Naive thymus-derived CD8-positive, alpha-beta T cell (primary cell): ENCODE measurements at regions of chr1 and their contacts with region 1.

Region 1: DNA sequence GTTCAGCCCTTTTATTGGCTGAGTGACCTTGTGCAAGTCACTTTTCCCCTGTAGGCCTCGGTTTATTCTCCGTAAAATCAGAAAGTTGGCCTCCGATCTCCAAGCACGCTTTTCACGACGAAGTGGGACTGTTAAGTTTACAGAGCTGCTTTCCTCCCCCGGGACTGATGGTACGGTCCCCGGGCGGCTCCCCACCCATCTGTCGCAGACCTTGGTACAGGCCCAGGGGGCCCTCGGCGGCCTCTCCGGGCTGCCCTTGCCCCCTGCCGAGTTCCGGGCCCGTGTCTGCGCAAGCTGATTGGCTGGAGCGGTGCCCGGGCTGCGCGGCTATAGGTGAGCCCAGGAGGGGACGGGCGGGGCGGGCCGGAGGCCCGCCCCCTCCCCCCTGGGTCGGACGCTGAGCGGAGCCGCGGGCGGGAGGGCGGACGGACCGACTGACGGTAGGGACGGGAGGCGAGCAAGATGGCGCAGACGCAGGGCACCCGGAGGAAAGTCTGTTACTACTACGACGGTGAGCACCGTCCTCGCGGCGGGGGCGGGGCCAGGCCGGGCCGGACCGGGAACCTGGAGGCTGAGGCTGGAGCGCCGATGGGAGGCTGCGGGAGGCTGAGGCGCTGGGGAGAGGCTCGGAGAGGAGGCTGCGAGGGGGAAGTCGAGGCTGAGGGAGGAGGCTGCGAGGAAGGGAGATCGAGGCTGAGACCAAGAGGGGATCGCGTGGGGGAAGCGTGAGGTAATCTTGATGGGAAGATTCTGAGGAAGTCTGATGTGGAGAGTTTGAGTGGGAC is at the start of gene HDAC1:
- DNase-seq: peak; percentile 92 to 98 (median 96)
- ATAC-seq: peak; percentile 95
- H3K4me3 Mint-ChIP-seq: peak within 1 kb of the TSS; percentile 93 to 100 (median 99)
- H3K27ac Mint-ChIP-seq: peak within 1 kb of the TSS; percentile 95 to 99 (median 96)
- H3K4me1 Mint-ChIP-seq: peaks cover 24 to 61% (median 51%) of the 10 kb centered on the region in 4 donors
- H3K27me3 Mint-ChIP-seq: no peaks in the 10 kb centered on the region
- polyA plus RNA-seq, gene HDAC1: 171 to 202 (median 173) TPM

Region 2: GRCh38 chr1:32221980-32222755 is 69.7 kb before region 1 on chr1 and contains the starts of genes EIF3I and TMEM234:
- POLR2A ChIA-PET with region 1: interaction called, 2,080 read pairs
- DNase-seq: peak; percentile 75 to 95 (median 90)
- ATAC-seq: peak; percentile 89 to 95
- H3K4me3 Mint-ChIP-seq: peak within 1 kb of the TSS; percentile 90 to 99 (median 96)
- H3K27ac Mint-ChIP-seq: peak within 1 kb of the TSS; percentile 95 to 100 (median 99)
- H3K4me1 Mint-ChIP-seq: peaks cover 14 to 53% (median 41%) of the 10 kb centered on the region in 4 donors
- H3K27me3 Mint-ChIP-seq: no peaks in the 10 kb centered on the region
- polyA plus RNA-seq, gene EIF3I: 167 to 181 (median 179) TPM
- polyA plus RNA-seq, gene TMEM234: 2.1 to 4.9 (median 4.4) TPM

Region 3: GRCh38 chr1:32273388-32274208 is 18.3 kb before region 1 on chr1:
- POLR2A ChIA-PET with region 1: interaction called, 2,080 read pairs
- DNase-seq: peak; percentile 68 to 96 (median 86)
- ATAC-seq: peak; percentile 80 to 95
- H3K4me3 Mint-ChIP-seq: peak overlapping the region; percentile 78 to 95 (median 86)
- H3K27ac Mint-ChIP-seq: peak overlapping the region; percentile 94 to 100 (median 97)
- H3K4me1 Mint-ChIP-seq: peaks cover 44 to 81% (median 71%) of the 10 kb centered on the region in 4 donors
- H3K27me3 Mint-ChIP-seq: peaks cover 0 to 3% (median 0%) of the 10 kb centered on the region in 5 donors

Region 4: DNA sequence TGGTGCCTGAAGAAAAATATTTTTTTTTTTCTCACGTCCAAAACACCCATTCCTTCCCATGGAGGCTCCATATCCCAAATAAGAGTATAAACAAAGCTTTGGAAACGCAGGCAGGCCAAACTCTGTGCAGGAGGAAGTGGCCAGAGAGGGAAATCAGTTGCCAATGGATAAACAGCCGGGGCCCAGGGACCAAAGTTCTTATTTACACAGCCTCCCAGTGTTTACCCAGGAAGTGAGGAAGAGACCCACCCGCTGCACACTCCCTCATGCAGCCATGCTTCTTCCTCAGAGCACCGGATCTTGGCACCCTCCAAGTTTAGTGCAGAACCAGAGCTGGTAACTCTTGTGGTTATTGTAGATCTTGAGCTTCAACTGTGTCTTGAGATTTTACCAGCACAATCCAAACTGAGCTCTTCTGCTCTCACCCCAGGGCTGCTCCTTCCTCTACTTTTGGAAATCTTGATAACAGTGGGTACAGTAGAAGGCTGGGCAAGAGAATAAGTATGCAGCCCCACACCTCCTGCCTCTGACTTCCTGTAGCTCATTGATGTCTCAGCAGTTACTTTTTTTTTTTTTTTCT is 29.9 kb after region 1 on chr1:
- POLR2A ChIA-PET with region 1: interaction called, 25 read pairs
- DNase-seq: peak in 6 of 10 donors; percentile 16 to 55 (median 36)
- ATAC-seq: peak; percentile 90 to 91
- H3K4me3 Mint-ChIP-seq: peak overlapping the region; percentile 62 to 88 (median 72)
- H3K27ac Mint-ChIP-seq: peak overlapping the region; percentile 67 to 94 (median 91)
- H3K4me1 Mint-ChIP-seq: peaks cover 14 to 54% (median 36%) of the 10 kb centered on the region in 4 donors
- H3K27me3 Mint-ChIP-seq: no peaks in the 10 kb centered on the region